CD4-positive, alpha-beta T cell (primary cell): ENCODE measurements at regions of chr2 and their contacts with region 1.

Region 1: DNA sequence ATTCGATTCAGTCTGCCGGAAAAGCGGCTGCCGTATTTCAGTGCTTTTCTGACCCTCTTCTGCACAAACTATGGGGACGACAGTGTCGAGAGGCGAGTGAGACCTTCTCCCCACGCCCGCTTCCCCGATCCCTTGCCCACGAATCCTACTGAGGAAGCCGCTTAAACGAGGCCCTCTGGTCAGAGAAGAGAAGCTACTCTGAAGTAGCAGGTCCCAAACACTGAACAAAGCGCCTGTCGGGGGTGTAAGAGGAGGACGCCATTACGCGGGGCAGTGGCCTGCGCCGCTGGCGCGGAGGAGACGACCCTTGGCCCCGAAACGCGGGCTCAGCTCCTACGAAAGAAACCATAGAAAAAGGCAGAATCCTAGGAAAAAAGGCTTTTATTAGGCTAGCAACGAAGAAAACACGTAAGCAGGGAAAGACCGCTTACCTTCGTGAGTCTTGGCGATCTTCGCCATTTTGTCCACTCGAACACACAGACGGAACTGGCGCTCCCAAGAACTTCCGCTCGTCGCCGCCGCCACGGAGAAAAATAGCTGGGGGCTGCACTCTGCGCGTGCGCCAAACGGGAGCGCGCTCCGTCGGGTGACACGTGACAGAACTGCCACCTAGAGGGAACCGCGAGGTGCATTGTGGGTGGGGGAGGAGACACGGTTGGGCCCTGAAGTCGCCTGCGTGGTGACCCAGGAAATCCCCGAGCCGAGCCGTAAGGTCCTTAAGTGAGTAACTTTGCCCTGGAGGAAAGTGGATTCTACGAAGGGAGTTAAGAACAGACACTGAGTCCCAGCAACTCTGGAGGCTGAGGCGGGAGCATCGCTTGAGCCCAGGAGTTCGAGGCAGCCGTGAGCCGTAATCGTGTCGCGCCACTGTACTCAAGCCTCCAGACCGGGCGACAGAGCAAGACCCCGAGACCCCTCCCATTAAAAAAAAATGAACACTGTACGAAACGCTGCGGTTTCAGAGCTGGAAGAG is at the start of gene SF3B1:
- DNase-seq: peak; percentile 97 to 100 (median 99)
- ATAC-seq: peak; percentile 95
- H3K4me3 ChIP-seq: peak within 1 kb of the TSS; percentile 78
- H3K4me3 Mint-ChIP-seq: peak within 1 kb of the TSS; percentile 98
- H3K27ac ChIP-seq: peak within 1 kb of the TSS; percentile 97 to 99
- H3K27ac Mint-ChIP-seq: peak within 1 kb of the TSS; percentile 99
- H3K4me1 ChIP-seq: peaks cover 37% of the 10 kb centered on the region
- H3K4me1 Mint-ChIP-seq: peaks cover 61% of the 10 kb centered on the region
- H3K27me3 ChIP-seq: no peaks in the 10 kb centered on the region
- H3K27me3 Mint-ChIP-seq: no peaks in the 10 kb centered on the region
- CTCF ChIP-seq: no peak
- total RNA-seq, gene SF3B1: 498 to 529 TPM

Region 2: DNA sequence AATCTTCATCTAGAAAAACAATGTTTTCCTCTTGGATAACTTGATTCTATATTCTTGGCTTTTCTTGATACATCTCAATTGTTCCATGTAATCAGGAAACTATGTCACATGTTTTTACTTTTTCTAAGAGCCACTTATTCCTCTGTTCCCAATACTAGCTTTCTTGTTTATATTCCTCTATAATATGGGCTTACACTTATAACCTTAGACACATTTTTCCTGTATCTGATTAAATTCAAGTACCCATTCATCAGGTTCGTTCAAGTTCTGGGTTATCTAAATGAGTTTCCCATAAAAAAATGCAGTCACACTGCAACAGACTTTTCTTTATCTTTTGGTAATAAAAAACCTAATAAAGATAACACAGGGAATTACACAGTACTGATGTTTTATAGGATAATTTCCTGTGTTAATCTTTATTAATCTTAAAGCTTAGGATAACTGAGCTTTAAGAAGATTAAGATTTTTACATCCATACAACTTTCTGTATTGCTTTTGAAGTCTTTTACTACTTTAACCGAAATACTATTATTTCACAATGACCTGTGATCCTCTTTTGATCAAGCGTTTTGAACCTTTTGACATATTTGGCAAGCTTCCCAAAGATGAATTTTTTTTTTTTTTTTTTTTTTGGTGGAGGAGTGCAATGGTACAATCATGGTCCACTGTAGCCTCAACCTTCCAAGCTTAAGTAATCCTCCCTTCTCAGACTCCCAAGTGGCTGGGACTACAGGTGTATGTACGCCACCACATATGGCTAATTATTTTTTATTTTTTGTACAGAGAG is 581.3 kb before region 1 on chr2:
- CTCF ChIA-PET with region 1: no interaction called
- POLR2A ChIA-PET with region 1: no interaction called
- intact Hi-C with region 1: no loop called
- DNase-seq: no peak
- ATAC-seq: no peak
- H3K4me3 ChIP-seq: no peak overlapping the region
- H3K4me3 Mint-ChIP-seq: no peak overlapping the region
- H3K27ac ChIP-seq: no peak overlapping the region
- H3K27ac Mint-ChIP-seq: no peak overlapping the region
- H3K4me1 ChIP-seq: no peaks in the 10 kb centered on the region
- H3K4me1 Mint-ChIP-seq: no peaks in the 10 kb centered on the region
- H3K27me3 ChIP-seq: no peaks in the 10 kb centered on the region
- H3K27me3 Mint-ChIP-seq: no peaks in the 10 kb centered on the region
- CTCF ChIP-seq: no peak

Region 3: DNA sequence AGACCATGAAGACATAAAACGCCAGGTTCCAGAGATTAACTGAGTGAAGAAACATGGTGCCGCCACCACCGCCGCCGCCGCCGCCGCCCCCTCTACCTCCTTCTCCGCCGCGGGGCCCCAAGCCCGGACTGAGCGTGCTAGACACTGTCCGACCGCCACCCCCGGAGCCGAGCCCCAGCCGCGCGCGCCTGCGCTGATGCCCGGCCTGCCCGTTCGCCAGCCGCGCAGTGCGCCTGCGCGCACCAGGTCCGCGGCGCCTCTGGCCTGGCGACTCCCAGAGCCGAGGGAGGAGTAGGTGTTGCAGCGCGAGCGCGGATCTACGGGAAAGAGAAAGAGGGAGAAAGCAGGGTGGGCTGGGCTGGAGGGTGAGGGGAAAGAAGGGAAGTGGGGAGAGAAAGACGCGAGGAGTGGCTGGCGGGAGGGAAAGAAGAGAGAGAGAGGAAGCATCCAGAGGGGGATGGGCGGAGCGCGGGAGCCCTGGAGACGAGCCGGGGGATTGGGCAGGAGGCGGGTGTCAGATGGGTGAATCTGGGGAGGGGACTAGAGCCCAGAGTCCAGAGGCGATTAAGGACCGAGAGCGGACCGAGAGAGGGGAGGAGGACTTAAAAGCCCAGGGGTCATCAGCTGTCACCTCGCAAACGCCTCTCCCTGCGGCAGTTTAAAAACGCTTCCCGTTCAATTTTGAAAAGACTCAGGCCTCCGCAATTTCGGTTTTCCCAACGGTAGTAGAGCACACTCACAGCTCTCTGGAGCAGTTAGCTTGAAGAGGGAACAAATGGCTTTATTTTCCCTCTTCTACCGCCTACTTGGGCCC is 508.1 kb before region 1 on chr2 and contains the start of gene PGAP1:
- CTCF ChIA-PET with region 1: no interaction called
- POLR2A ChIA-PET with region 1: interaction called, 6 read pairs
- intact Hi-C with region 1: loop called in 1 of 2 experiments (anchors 5 kb)
- DNase-seq: peak; percentile 60 to 92 (median 77)
- ATAC-seq: peak; percentile 70
- H3K4me3 ChIP-seq: peak within 1 kb of the TSS; percentile 90
- H3K4me3 Mint-ChIP-seq: peak within 1 kb of the TSS; percentile 98
- H3K27ac ChIP-seq: peak within 1 kb of the TSS; percentile 43 to 61
- H3K27ac Mint-ChIP-seq: peak within 1 kb of the TSS; percentile 86
- H3K4me1 ChIP-seq: peaks cover 15% of the 10 kb centered on the region
- H3K4me1 Mint-ChIP-seq: peaks cover 43% of the 10 kb centered on the region
- H3K27me3 ChIP-seq: no peaks in the 10 kb centered on the region
- H3K27me3 Mint-ChIP-seq: no peaks in the 10 kb centered on the region
- CTCF ChIP-seq: no peak
- total RNA-seq, gene PGAP1: 10.3 to 11.3 TPM

Region 4: DNA sequence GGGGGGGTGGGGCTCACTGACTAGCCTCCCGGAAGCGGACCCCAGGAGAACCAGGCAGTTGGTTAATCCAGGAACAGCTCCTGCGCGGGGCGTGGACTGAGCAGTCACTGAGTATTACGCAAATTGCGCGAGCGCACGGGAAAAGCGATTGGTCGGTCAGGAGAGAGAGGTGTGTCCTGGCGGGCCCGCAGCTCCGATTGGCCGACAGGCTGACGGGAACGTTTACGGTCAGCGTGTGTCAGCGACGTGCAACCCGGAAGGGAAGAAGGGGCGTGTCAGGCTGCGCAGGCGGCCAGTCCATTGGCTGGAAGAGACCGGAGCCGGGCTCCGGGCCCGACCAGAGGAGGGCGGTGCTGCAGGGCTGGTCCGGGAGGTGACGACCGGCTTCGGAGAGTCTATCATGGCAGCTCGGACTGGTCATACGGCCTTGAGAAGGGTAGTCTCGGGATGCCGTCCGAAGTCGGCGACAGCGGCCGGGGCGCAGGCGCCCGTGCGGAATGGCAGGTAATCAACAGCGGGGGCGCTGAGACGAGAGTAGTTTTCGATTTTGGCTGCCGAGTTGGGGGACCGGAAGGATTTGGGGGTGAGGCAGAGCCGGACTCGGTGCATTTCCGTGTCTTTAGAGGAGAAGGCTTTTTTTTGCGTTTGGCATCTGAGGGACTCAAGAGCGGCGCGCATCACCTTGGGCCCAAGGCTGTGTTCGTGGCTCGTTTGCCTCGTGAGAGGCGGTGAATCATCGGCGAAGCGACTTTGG is 18.5 kb after region 1 on chr2 and contains the start of gene COQ10B:
- CTCF ChIA-PET with region 1: interaction called, 9 read pairs
- POLR2A ChIA-PET with region 1: interaction called, 260 read pairs
- intact Hi-C with region 1: loop called (anchors 1 kb)
- DNase-seq: peak; percentile 94 to 100 (median 97)
- ATAC-seq: peak; percentile 85
- H3K4me3 ChIP-seq: peak within 1 kb of the TSS; percentile 67
- H3K4me3 Mint-ChIP-seq: peak within 1 kb of the TSS; percentile 99
- H3K27ac ChIP-seq: peak within 1 kb of the TSS; percentile 98 to 100
- H3K27ac Mint-ChIP-seq: peak within 1 kb of the TSS; percentile 100
- H3K4me1 ChIP-seq: peaks cover 29% of the 10 kb centered on the region
- H3K4me1 Mint-ChIP-seq: peaks cover 52% of the 10 kb centered on the region
- H3K27me3 ChIP-seq: no peaks in the 10 kb centered on the region
- H3K27me3 Mint-ChIP-seq: no peaks in the 10 kb centered on the region
- CTCF ChIP-seq: peak; percentile 47
- total RNA-seq, gene COQ10B: 53.4 to 55.3 TPM

Region 5: DNA sequence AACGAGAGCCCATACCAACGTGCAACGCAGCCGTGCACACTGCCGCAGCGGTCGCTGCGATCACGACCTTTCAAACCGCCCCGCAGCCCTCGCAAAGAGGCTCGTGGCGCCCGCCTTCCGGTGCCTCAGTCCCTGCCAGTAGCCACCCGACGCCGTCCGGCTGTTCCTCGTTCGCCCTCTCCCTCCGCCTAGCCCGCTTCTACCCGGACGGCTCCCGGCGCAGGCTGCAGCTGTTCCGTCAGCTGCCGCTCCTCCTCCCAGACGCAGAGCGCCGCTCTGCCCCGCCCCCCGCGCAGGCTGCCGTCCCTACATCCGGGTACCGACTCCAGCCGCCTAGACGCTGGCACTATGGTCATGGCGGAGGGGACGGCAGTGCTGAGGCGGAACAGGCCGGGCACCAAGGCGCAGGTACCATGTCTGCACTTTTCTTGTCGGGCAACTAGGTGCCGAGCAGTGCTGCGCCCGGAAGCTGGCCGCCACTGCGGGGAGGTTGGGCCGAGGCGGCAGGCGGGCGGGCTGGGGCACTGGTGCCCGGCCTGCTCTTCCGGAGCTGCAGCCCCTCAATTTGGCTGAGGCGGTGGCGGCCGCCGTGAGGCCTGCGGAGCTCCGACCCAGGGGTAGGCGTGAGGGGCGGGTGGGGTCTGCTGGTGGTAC is 81.0 kb after region 1 on chr2 and contains the start of gene MOB4:
- CTCF ChIA-PET with region 1: no interaction called
- POLR2A ChIA-PET with region 1: interaction called, 49 read pairs
- intact Hi-C with region 1: loop called in 1 of 2 experiments (anchors 5 kb)
- DNase-seq: peak; percentile 88 to 97 (median 92)
- ATAC-seq: peak; percentile 89
- H3K4me3 ChIP-seq: peak within 1 kb of the TSS; percentile 77
- H3K4me3 Mint-ChIP-seq: peak within 1 kb of the TSS; percentile 98
- H3K27ac ChIP-seq: peak within 1 kb of the TSS; percentile 86 to 91
- H3K27ac Mint-ChIP-seq: peak within 1 kb of the TSS; percentile 89
- H3K4me1 ChIP-seq: peaks cover 22% of the 10 kb centered on the region
- H3K4me1 Mint-ChIP-seq: peaks cover 46% of the 10 kb centered on the region
- H3K27me3 ChIP-seq: no peaks in the 10 kb centered on the region
- H3K27me3 Mint-ChIP-seq: no peaks in the 10 kb centered on the region
- CTCF ChIP-seq: no peak
- total RNA-seq, gene MOB4: 28.4 to 29.8 TPM

Region 6: DNA sequence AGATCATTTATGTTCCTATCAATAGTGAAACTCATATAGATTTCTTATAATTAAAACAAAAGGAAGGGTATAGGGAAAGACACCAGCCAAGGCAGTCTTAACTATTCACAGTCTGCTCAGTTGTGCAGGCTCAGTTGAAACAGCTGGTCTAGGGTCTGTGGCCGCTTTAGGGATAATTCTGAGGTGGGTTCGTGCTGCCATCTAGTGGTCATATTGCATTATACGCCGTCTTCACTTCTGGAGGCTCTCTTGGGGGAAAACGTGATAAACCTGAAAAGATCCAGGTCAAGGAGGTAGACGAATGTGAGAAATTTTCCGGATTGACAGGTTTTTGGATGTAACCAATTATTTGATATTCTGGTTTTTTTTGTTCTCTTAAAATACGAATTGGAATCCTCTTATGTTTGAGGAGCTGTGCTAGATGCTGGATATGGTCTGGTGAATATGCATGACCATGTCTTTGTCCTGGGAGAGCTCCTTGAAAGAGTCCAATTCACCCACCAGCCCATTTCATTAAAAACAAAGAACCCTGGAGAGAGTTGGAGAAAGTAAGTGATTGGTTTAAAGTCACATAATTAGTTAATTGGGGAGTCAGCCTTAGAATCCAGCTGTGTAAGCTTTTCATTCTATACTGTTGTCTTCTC is 862.0 kb after region 1 on chr2:
- CTCF ChIA-PET with region 1: no interaction called
- POLR2A ChIA-PET with region 1: no interaction called
- intact Hi-C with region 1: loop called in 1 of 2 experiments (anchors 10 kb)
- DNase-seq: peak; percentile 28 to 82 (median 48)
- ATAC-seq: peak; percentile 77
- H3K4me3 ChIP-seq: no peak overlapping the region
- H3K4me3 Mint-ChIP-seq: no peak overlapping the region
- H3K27ac ChIP-seq: no peak overlapping the region
- H3K27ac Mint-ChIP-seq: no peak overlapping the region
- H3K4me1 ChIP-seq: no peaks in the 10 kb centered on the region
- H3K4me1 Mint-ChIP-seq: no peaks in the 10 kb centered on the region
- H3K27me3 ChIP-seq: peaks cover 0 to 2% of the 10 kb centered on the region in 2 experiments
- H3K27me3 Mint-ChIP-seq: peaks cover 32% of the 10 kb centered on the region
- CTCF ChIP-seq: peak; percentile 94